H1 (cell line): ENCODE measurements at regions of chr2 and their contacts with region 1.

Region 1: DNA sequence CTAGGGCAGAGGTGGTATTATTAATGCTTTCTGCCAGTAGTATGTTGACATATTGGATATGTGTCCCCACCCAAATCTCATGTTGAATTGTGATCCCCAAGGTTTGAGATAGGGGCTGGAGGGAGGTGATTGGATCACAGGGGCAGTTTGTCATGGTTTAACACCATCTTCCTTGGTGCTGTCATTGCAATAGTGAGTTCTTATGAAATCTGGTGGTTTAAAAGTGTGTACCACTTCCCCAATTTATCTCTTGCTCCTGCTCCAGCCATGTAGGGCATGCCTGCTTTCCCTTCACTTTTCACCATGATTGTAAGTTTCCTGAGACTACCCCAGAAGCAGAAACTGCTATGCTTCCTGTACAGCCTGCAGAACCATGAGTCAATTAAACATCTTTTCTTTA is 47.1 kb upstream of the THSD7B start:
- DNase-seq: no peak
- H3K4me3 ChIP-seq: no peak overlapping the region
- H3K27ac ChIP-seq: no peak overlapping the region
- H3K4me1 ChIP-seq: no peaks in the 10 kb centered on the region
- H3K27me3 ChIP-seq: no peaks in the 10 kb centered on the region
- CTCF ChIP-seq: no peak
- EP300 ChIP-seq: no peak
- POLR2A ChIP-seq: no peak
- RAD21 ChIP-seq: no peak

Region 2: GRCh38 chr2:136738044-136738443 is 19.8 kb after region 1 on chr2:
- CTCF ChIA-PET with region 1: interaction called, 14 read pairs
- POLR2A ChIA-PET with region 1: no interaction called
- DNase-seq: no peak
- H3K4me3 ChIP-seq: no peak overlapping the region
- H3K27ac ChIP-seq: no peak overlapping the region
- H3K4me1 ChIP-seq: no peaks in the 10 kb centered on the region
- H3K27me3 ChIP-seq: no peaks in the 10 kb centered on the region
- CTCF ChIP-seq: no peak
- EP300 ChIP-seq: no peak
- POLR2A ChIP-seq: no peak
- RAD21 ChIP-seq: no peak

Region 3: GRCh38 chr2:136765736-136766323 is 47.6 kb after region 1 on chr2:
- CTCF ChIA-PET with region 1: no interaction called
- POLR2A ChIA-PET with region 1: no interaction called
- DNase-seq: peak in 1 of 2 experiments; percentile 49
- H3K4me3 ChIP-seq: peak overlapping the region; percentile 57 to 83 (median 68)
- H3K27ac ChIP-seq: no peak overlapping the region
- H3K4me1 ChIP-seq: peaks cover 0 to 7% (median 4%) of the 10 kb centered on the region in 4 experiments; a peak in 2 of 7 replicates
- H3K27me3 ChIP-seq: peaks cover 14 to 45% (median 42%) of the 10 kb centered on the region in 4 experiments
- CTCF ChIP-seq: no peak
- EP300 ChIP-seq: no peak
- POLR2A ChIP-seq: no peak
- RAD21 ChIP-seq: no peak